IMR-90 (cell line): ENCODE measurements at regions of chr11 and their contacts with region 1.

Region 1: GRCh38 chr11:114348200-114349191 is 51.8 kb downstream of the C11orf71 start:
- DNase-seq: peak; percentile 80
- ATAC-seq: peak; percentile 97
- H3K4me3 ChIP-seq: no peak overlapping the region
- H3K27ac ChIP-seq: no peak overlapping the region
- H3K4me1 ChIP-seq: no peaks in the 10 kb centered on the region
- H3K27me3 ChIP-seq: no peaks in the 10 kb centered on the region
- CTCF ChIP-seq: peak; percentile 67
- POLR2A ChIP-seq: no peak
- RAD21 ChIP-seq: peak; percentile 71

Region 2: DNA sequence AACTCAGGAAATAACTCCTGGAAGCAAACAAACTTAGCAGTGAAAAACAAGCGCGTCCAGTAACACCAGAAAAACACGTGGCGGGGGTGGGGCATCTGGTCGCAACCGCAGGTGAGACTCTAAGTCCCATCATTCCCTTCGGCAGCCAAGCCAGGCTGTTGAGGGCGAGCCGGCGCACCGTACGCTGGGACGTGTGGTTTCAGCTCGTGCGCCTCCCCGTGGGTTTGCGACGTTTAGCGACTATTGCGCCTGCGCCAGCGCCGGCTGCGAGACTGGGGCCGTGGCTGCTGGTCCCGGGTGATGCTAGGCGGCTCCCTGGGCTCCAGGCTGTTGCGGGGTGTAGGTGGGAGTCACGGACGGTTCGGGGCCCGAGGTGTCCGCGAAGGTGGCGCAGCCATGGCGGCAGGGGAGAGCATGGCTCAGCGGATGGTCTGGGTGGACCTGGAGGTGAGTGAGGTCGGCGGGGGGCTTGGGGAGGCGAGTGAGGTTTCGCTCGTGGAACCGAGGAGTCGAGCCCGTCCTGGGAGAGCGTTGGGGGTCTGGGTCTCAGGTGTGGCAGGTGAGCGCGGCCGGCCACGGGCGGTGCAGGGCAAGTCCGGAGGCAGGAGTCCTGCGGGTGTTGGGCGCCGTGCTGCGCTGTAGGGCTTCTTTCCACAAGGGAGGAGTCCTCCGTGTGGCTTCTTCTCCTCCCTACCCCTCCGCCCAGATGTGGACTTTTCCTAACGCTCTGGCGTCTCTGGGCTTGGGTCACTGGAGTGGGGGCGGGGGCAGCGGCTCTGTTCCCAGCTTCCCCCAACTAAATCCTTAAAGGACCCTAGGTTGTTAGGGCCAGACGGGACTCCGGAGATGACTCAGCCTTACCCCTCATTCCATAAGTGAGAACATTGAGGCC is 91.0 kb after region 1 on chr11 and contains the start of gene REXO2:
- CTCF ChIA-PET with region 1: no interaction called
- POLR2A ChIA-PET with region 1: no interaction called
- dilution Hi-C with region 1: no loop called
- in situ Hi-C with region 1: loop called (anchors 10 kb)
- intact Hi-C with region 1: loop called (anchors 2 kb)
- DNase-seq: peak; percentile 93
- ATAC-seq: peak; percentile 93
- H3K4me3 ChIP-seq: peak within 1 kb of the TSS; percentile 89
- H3K27ac ChIP-seq: peak within 1 kb of the TSS; percentile 90
- H3K4me1 ChIP-seq: peaks cover 5% of the 10 kb centered on the region
- H3K27me3 ChIP-seq: no peaks in the 10 kb centered on the region
- CTCF ChIP-seq: peak; percentile 51
- POLR2A ChIP-seq: peak; percentile 58
- RAD21 ChIP-seq: peak; percentile 37; the same call in 1 of the 2 replicates
- total RNA-seq, gene REXO2: 179 and 276 TPM in 2 replicates

Region 3: DNA sequence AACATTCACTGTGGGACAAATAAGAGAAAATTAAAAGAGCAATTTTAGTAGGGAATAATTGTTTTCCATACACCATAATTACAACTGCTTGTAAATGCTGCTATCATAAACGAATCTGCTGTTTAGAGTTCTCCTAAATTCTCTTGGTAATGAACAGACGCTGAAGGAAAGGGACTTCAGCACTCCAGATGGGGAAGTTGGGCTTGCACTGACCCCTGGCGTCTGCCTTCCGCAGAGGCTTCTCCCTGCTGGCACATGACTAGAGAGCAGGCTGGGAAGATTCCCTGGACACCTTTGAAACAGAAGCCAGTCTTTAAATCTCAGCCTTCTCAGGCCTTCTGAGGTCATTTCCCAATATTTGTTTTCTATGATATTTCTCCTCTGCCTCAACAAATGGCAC is 413.9 kb after region 1 on chr11:
- CTCF ChIA-PET with region 1: no interaction called
- POLR2A ChIA-PET with region 1: no interaction called
- dilution Hi-C with region 1: no loop called
- in situ Hi-C with region 1: loop called (anchors 5 kb)
- intact Hi-C with region 1: loop called (anchors 2 kb)
- DNase-seq: peak; percentile 54
- ATAC-seq: peak; percentile 91
- H3K4me3 ChIP-seq: no peak overlapping the region
- H3K27ac ChIP-seq: no peak overlapping the region
- H3K4me1 ChIP-seq: no peaks in the 10 kb centered on the region
- H3K27me3 ChIP-seq: no peaks in the 10 kb centered on the region
- CTCF ChIP-seq: peak; percentile 78
- POLR2A ChIP-seq: no peak
- RAD21 ChIP-seq: peak; percentile 80